ENCODE measurements at regions of chr17 and their contacts with region 1.

Region 1: GRCh38 chr17:40177275-40177874 is at the start of gene RAPGEFL1:
- DNase-seq: peak; percentile 95
- ATAC-seq: peak; percentile 97
- H3K4me3 Mint-ChIP-seq: peak within 1 kb of the TSS; percentile 53
- H3K27ac Mint-ChIP-seq: no peak within 1 kb of the TSS
- H3K4me1 Mint-ChIP-seq: peaks cover 8% of the 10 kb centered on the region
- H3K27me3 Mint-ChIP-seq: no peaks in the 10 kb centered on the region
- total RNA-seq, gene RAPGEFL1: 5.1 to 6.2 TPM

Region 2: DNA sequence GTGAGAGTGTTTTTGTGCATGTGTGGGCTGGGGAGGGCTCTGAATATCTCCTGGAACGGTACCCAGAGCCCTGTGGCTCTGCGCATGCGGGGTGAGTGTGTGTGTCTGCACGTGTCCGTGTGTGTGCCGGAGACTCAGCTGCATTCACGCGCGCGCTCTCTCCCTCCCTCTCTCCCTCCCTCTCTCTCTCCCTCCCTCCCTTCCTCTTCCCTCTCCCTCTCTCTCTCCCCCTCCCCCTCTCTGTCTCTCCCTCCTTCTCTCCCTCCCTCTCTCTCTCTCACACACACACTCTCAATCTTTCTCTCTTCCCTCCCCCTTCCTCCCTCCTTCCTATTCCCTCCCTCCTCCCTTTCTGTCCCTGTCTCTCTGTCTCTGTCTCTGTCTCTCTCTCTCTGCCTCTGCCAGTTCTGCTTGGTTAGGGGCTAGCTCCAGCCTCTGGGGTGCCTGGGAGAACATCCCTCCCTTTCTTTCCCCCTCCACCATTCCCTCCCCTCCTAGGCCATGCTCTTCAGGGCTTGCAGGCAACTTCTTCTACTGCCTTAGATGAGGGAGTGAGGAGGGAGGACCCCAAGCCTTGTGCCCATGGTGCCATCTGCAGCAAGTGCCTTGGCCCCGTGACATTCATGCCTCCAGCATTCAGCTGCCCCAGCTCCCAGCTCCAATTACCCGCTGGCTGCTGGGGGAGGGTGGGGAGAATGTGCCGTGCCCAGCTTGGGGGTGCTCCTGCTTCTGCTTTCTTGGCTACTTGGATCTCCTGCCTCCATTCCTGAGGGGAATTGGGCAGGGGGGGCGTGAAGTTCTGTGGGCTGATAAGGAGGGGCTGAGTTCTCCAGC is 108.2 kb before region 1 on chr17:
- CTCF ChIA-PET with region 1: no interaction called
- POLR2A ChIA-PET with region 1: no interaction called
- intact Hi-C with region 1: loop called in 1 of 2 experiments (anchors 1 kb)
- DNase-seq: peak; percentile 92
- ATAC-seq: peak; percentile 76
- H3K4me3 Mint-ChIP-seq: peak overlapping the region; percentile 73
- H3K27ac Mint-ChIP-seq: peak overlapping the region; percentile 96
- H3K4me1 Mint-ChIP-seq: peaks cover 69% of the 10 kb centered on the region
- H3K27me3 Mint-ChIP-seq: no peaks in the 10 kb centered on the region

Region 3: DNA sequence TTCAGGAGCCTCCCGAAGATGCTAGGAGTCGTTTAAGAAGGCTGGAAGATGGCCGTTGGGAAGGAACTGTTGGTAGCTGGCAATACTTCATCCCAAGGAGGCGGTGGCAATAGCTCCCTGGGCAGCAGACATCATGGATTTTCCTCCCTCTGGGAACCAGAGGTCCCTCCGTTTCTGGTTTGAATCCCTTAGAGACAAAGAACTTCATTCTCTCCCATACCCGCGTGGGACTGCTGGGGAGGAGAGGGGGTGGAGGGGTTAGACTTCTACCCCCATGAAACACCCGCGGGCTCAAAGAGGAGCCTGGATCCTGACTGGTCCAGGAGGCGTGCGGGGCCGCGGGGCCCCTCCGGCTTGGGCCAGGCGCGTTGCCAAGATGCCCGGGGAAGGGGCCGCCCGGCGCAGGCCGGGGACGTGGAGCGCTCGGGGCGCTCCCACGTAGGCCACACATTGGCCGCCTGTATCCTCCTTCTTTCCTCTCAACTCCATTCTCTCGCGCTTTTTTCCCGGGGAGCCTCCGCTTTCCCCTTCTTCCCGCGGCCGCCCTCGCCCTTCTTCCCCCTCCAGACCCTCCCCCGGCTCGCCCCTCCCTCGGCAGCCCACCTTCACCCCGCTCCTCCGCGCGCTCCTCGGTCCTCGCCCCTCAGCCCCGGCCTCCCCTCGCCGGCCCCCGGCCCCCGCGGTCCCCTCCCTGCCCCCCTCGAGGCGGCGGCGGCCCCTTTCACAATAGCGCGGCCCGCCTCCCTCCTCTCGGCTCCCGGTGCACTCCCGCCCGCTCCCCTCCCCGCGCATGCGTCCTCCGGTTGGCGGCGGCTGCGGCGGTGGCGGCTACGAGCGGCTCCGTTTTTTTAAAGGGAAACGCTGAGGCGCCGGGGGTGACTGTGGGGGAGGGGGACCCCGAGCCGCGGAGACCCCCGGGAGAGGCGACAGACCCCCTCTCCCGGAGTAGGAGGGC is 55.9 kb before region 1 on chr17 and contains the start of gene MSL1:
- CTCF ChIA-PET with region 1: interaction called, 7 read pairs
- POLR2A ChIA-PET with region 1: no interaction called
- intact Hi-C with region 1: loop called in 1 of 2 experiments (anchors 2 kb)
- DNase-seq: peak; percentile 92
- ATAC-seq: peak; percentile 69
- H3K4me3 Mint-ChIP-seq: peak within 1 kb of the TSS; percentile 79
- H3K27ac Mint-ChIP-seq: peak within 1 kb of the TSS; percentile 57
- H3K4me1 Mint-ChIP-seq: peaks cover 29% of the 10 kb centered on the region
- H3K27me3 Mint-ChIP-seq: no peaks in the 10 kb centered on the region
- total RNA-seq, gene MSL1: 81.7 to 89.6 TPM

Region 4: DNA sequence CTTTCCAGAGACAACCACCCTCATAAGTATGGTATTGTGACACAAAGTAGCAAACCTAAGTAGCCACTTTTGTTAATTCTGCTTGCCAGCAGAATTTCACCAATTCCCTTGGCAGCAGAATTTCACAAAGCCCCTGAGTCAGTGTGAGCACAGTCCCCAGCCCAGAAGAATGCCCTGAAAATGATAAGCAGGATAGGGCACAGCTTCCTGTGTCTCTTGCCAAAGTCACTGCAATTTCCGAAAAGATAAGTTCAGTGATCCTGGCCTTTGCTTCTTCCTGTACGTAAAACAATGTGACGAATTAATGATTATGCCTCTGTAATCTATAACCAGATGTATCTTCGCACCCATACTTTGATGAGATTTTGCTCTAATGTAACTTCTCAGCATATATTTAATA is 25.8 kb after region 1 on chr17:
- CTCF ChIA-PET with region 1: no interaction called
- POLR2A ChIA-PET with region 1: no interaction called
- intact Hi-C with region 1: no loop called
- DNase-seq: no peak
- ATAC-seq: no peak
- H3K4me3 Mint-ChIP-seq: no peak overlapping the region
- H3K27ac Mint-ChIP-seq: no peak overlapping the region
- H3K4me1 Mint-ChIP-seq: peaks cover 5% of the 10 kb centered on the region
- H3K27me3 Mint-ChIP-seq: peaks cover 2% of the 10 kb centered on the region